BJ (cell line): ENCODE measurements at regions of chr16 and their contacts with region 1.

Region 1: GRCh38 chr16:4253394-4254150 is 11.7 kb upstream of the SRL start:
- DNase-seq: peak; percentile 91
- H3K4me3 ChIP-seq: peak overlapping the region; percentile 64
- H3K27me3 ChIP-seq: no peaks in the 10 kb centered on the region
- CTCF ChIP-seq: no peak

Region 2: DNA sequence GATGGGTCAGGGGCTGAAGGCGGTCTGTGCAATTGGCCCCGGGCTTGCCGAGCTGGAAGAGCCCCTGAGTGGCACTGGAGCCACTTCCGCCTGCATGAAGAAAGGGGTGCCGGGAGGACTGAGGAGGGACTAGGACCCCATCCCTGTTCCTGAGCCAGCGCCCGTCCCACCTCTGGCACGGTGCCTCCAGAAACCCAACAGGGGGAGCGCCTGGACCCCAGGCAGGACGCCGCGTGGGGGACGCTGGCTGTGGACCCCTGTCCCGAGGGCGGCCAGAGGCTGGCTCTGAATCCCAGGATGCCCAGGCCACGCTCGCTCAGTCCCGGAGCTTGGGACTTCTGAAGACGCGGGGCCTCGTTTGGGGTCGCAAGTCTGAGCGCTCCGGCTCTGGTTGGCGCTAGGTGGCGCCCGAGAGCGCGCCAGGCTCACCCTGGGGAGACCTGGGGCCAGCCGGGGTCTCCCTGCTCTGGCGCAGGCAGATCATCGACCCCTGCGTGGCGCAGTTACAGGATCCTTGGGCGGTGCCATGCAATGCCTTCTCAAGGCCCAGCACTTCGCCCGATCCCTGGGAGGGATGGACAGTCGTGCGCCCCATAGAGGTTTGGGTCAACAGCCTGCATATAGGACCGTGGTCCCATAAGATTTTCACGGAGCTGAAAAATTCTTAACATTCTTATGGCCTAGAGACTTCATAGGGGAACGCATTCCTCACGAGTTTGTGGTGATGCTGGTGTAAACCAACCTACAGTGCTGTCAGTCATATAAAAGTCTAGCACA is 314.5 kb before region 1 on chr16:
- CTCF ChIA-PET with region 1: interaction called, 16 read pairs
- POLR2A ChIA-PET with region 1: no interaction called
- DNase-seq: peak; percentile 67
- H3K4me3 ChIP-seq: peak overlapping the region; percentile 35
- H3K27me3 ChIP-seq: no peaks in the 10 kb centered on the region
- CTCF ChIP-seq: peak; percentile 97

Region 3: DNA sequence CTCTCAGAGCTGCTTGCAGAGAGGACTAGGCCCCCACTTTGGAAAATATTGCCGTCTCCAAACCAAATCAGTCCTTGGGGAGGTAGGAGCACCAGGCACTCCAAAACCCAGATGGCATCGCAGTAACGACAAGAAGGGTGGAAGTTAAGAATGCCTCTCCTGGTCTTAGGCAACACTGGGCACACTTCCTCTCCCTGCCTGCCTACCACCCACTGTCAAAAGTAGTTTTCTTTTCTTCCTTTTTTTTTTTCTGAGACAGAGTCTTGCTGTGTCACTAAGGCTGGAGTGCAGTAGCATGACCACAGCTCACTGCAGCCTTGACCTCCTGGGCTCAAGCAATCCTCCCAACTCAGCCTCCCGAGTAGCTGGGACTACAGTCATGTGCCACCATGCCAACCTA is 58.9 kb before region 1 on chr16:
- CTCF ChIA-PET with region 1: interaction called, 76 read pairs
- POLR2A ChIA-PET with region 1: no interaction called
- DNase-seq: no peak
- H3K4me3 ChIP-seq: no peak overlapping the region
- H3K27me3 ChIP-seq: no peaks in the 10 kb centered on the region; the same call in 1 of the 2 replicates
- CTCF ChIP-seq: no peak

Region 4: DNA sequence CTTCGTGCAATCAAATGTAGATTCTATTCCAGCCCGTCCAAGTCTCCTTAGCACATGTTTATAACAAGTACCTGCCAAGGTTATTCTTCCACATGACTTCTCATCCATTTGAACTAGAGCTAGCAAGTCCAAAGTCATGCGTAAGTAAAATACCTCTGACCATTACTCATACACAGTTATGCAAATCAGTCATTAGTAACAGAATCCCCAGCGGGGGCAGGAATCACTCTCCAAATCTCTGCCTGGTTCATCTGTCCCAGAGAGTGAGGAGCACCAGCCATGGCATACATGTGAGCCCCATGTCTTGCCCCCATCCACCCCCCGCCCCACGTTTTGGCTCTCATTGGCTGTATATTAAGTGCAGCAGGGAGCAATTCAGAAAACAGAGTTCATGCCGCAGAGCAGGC is 39.4 kb before region 1 on chr16:
- CTCF ChIA-PET with region 1: interaction called, 15 read pairs
- POLR2A ChIA-PET with region 1: no interaction called
- DNase-seq: peak; percentile 62
- H3K4me3 ChIP-seq: no peak overlapping the region
- H3K27me3 ChIP-seq: no peaks in the 10 kb centered on the region
- CTCF ChIP-seq: no peak

Region 5: DNA sequence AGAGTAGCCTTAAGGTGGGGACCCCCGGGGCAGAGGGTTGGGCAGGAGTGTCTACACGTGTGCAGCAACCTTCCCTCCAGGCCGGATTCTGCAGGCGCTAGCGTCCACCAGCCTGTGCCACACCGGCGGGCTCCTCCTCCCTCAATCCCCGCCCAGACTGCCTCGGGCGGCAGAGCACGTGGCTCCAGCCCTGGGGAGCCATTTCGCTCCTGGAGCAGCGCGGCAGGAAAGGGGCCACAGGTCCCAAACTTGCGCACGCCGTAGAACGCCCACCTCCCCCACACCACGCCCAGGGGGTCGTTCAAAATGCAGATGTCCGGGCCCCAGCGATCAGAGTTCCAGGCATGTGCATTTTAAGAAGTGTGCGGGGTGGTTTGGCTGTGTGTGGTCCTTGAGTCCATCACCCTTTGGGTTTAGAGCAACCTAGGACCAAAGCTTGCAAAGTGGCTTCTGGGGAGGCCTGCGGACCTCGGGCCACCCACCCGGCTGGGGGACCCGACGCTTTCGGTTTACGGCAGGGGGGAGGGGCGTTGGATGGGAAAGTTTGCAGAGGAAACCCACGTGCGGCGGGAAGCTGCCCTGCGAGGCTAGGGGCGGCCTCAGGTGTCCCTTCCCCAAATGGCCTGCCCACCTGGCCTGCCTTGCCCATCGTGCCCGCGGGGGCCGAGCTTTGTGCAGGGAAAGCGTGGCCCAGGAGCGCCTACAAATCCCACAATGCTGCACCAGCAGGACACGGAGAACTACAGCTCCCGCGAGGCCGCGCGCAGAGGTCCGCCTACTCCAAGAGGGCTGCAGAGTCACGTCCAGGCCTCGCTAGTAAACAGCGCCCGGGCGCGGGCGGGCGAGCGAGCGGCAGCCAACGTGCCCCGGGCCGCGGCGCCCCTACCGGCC is 17.8 kb after region 1 on chr16:
- CTCF ChIA-PET with region 1: interaction called, 42 read pairs
- POLR2A ChIA-PET with region 1: interaction called, 7 read pairs
- DNase-seq: peak; percentile 47
- H3K4me3 ChIP-seq: peak overlapping the region; percentile 73
- H3K27me3 ChIP-seq: no peaks in the 10 kb centered on the region
- CTCF ChIP-seq: no peak

Region 6: DNA sequence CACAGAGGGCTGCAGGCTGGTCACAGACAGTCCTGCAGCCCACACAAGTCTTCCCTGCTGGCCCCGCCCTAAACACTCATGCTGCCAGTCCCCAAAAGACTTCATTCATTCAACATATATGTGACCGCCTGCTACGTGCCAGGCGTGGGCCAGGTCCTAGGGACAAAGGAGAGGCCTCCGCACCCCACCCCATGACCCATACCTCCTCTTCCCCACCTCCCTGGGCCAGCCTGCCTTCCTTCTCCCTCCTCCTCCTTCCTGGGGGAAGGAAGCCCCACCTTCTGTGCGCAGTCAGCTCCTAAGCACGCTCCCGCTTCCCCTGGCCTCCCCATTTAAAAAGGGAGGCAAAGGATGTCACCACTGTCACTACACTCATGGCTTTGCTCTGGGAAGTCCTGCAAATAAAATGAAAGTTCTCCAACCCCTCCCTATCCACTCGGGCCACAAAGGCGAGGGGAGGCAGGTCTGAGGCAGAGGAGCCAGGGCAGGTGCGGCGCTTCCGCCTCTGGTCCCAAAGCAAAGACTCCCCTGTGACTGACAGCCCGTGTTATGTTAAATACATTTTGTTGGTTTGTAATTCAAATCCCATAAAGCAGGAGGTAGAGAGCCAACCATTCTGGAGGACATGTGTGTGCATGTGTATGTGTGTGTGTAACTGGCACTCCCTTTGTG is 489.8 kb after region 1 on chr16:
- CTCF ChIA-PET with region 1: no interaction called
- POLR2A ChIA-PET with region 1: no interaction called
- DNase-seq: no peak
- H3K4me3 ChIP-seq: no peak overlapping the region
- H3K27me3 ChIP-seq: no peaks in the 10 kb centered on the region
- CTCF ChIP-seq: no peak